ENCODE measurements at regions of chr6 and their contacts with region 1.

Region 1: DNA sequence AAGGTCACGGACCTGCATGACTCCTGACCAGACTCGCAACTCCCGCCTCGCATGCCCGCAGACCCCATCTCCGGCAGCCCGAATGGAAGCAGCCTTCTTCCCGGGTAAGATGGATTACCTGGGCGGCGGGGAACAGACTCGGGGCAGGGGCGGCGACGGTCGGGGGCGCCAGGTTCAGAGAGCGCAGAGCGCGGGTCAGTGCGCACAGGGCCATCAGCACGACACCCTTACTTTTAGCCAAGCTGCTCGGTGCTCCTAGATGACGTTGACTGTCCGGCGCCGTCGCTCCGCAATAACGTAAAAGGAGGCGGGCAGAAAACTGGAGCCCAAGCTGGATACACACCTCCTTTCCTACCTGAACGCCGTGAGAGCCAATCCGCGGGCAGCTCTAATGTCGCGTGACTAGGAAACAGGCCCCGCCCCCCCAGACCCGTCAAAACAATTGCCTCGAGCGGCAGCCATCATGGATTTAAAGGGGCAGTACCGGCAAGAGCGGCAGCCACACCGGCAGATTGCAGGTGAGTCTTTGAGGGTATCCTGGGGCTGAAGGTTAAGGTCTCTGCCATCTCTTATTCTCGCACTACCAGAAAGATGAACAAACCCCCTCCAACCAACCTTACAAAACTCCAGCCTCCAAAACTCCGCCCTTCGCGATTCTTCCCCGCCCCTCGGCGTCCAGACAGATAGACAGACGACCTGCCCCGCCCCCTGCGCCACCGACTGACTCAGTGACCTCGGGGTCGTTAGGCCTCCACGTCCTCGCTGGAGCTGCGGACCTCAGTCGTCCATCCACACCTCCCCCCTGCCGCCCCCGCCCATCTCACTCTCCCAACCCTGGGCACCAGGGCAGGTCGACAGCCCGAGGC is at the starts of genes KLC4 and MRPL2:
- DNase-seq: peak; percentile 98 to 100 (median 99)
- H3K4me3 ChIP-seq: peak within 1 kb of the TSS; percentile 60 to 90 (median 68)
- H3K27ac ChIP-seq: peak within 1 kb of the TSS; percentile 60 to 94 (median 75)
- H3K4me1 ChIP-seq: peaks cover 13 to 18% of the 10 kb centered on the region in 2 donors
- H3K27me3 ChIP-seq: no peaks in the 10 kb centered on the region
- CTCF ChIP-seq: no peak
- POLR2A ChIP-seq: peak; percentile 70 to 88
- total RNA-seq, gene KLC4: 16.1 to 51.9 (median 33.3) TPM
- total RNA-seq, gene MRPL2: 16.7 to 118 (median 74.6) TPM

Region 2: GRCh38 chr6:43143235-43144124 is 84.1 kb after region 1 on chr6:
- intact Hi-C with region 1: loop called in 1 of 2 experiments (anchors 5 kb)
- DNase-seq: peak; percentile 85 to 94 (median 89)
- H3K4me3 ChIP-seq: no peak overlapping the region
- H3K27ac ChIP-seq: no peak overlapping the region
- H3K4me1 ChIP-seq: peaks cover 0 to 6% of the 10 kb centered on the region in 2 donors
- H3K27me3 ChIP-seq: no peaks in the 10 kb centered on the region
- CTCF ChIP-seq: peak; percentile 88 to 99 (median 96)
- POLR2A ChIP-seq: no peak